Activated CD8-positive, alpha-beta memory T cell treated with anti-CD3 and anti-CD28 coated beads, Interleukin-2, amount 10 ng/mL, durations not matched to agents 7 days and 5 days (primary cell): ENCODE measurements at regions of chr17 and their contacts with region 1.

Region 1: GRCh38 chr17:76501018-76501826 is at the start of gene RHBDF2:
- DNase-seq: peak; percentile 96
- ATAC-seq: peak; percentile 92
- H3K4me3 Mint-ChIP-seq: peak within 1 kb of the TSS; percentile 84
- H3K27ac Mint-ChIP-seq: peak within 1 kb of the TSS; percentile 96
- H3K4me1 Mint-ChIP-seq: peaks cover 47% of the 10 kb centered on the region
- H3K27me3 Mint-ChIP-seq: no peaks in the 10 kb centered on the region
- total RNA-seq, gene RHBDF2: 29.6 to 42.1 TPM

Region 2: GRCh38 chr17:76432712-76433336 is 68.4 kb before region 1 on chr17:
- CTCF ChIA-PET with region 1: no interaction called
- DNase-seq: no peak
- ATAC-seq: peak; percentile 39
- H3K4me3 Mint-ChIP-seq: no peak overlapping the region
- H3K27ac Mint-ChIP-seq: no peak overlapping the region
- H3K4me1 Mint-ChIP-seq: peaks cover 4% of the 10 kb centered on the region
- H3K27me3 Mint-ChIP-seq: no peaks in the 10 kb centered on the region

Region 3: DNA sequence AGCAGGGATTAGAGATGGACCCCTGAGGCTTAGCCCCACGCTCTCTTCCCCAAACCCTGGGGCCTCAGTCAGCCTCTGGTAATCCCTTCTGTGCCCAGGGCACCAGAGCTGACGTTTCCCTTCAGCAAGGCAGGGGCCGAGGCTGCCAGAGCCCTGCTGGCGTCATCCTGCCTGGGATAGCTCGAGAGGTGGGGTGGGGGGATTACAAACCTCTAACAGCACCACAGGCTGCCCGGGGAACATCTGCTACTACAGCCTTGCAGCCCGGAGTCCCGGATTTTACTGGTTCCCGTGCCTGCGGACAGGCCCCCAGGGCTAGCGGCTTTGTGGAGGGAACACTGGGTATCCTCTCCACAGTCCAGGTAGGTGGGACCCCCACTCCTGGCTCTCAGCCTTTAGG is 33.9 kb before region 1 on chr17 and contains the start of gene AANAT:
- CTCF ChIA-PET with region 1: interaction called, 192 read pairs
- DNase-seq: no peak
- ATAC-seq: no peak
- H3K4me3 Mint-ChIP-seq: no peak within 1 kb of the TSS
- H3K27ac Mint-ChIP-seq: no peak within 1 kb of the TSS
- H3K4me1 Mint-ChIP-seq: peaks cover 4% of the 10 kb centered on the region
- H3K27me3 Mint-ChIP-seq: peaks cover 5% of the 10 kb centered on the region
- total RNA-seq, gene AANAT: not detected

Region 4: GRCh38 chr17:76515274-76515949 is 14.2 kb after region 1 on chr17:
- CTCF ChIA-PET with region 1: interaction called, 23 read pairs
- DNase-seq: peak; percentile 91
- ATAC-seq: peak; percentile 86
- H3K4me3 Mint-ChIP-seq: peak overlapping the region; percentile 53
- H3K27ac Mint-ChIP-seq: peak overlapping the region; percentile 98
- H3K4me1 Mint-ChIP-seq: peaks cover 47% of the 10 kb centered on the region
- H3K27me3 Mint-ChIP-seq: no peaks in the 10 kb centered on the region